Activated T-helper 2 cell treated with anti-CD3 and anti-CD28 coated beads, Interferon-gamma antibody, Interleukin-2, Interleukin-4, amounts not matched to agents 10 μg/mL and 5 μg/mL and 100 μg/mL, durations not matched to agents 14 hours and 24 hours and 36 hours (primary cell): ENCODE measurements at regions of chr10 and their contacts with region 1.

Region 1: DNA sequence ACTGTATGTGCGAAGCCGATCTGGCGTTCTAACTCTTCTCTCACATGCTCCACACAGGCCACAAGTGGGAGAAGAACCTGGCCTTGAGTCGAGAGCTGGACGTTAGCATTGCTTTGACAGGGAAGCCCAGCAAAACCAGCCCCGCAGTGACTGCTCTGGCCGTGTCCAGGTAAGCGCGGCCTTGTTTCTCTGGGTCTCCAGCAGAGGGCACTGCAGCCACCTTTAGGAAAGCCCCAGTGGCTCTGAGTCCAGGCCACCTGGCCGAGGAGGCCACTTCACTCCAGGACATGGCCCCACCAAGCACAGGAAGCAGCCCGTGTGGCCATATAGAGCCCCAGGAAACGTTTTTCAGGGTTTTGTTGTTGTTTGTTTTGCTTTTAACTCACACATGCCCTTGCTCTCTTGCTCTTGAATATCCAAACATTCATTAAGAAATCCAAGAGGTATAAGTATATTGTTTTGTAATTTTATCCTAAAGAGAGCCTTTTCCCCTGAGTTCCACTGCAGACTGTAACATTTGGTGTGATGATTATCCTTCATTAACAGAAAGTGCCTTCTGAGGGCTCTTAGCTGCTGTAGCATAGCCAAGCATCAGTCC is 41.8 kb upstream of the LRRC18 start:
- DNase-seq: peak; percentile 20
- H3K4me3 Mint-ChIP-seq: no peak overlapping the region
- H3K27ac Mint-ChIP-seq: no peak overlapping the region
- H3K4me1 Mint-ChIP-seq: no peaks in the 10 kb centered on the region
- H3K27me3 Mint-ChIP-seq: no peaks in the 10 kb centered on the region

Region 2: DNA sequence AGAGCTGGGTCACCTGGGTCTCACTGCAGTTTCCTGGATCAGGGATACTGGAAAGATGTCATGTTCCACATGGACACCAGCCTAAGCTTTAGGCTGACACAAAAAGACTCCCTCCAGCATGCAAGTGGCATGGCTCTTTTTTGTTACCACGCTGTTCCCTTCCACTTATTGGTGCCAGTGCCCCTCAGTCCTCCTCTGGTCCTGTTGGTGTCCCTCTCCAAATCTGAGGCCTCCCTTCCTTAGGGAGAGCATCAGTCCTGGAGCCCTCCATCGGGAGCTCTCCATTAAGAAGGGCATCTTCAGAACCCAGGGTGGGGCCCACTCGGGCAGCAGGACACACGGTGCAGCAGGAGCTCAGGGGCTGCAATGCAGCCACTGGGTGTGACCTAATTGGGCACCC is 34.3 kb after region 1 on chr10:
- intact Hi-C with region 1: no loop called
- DNase-seq: no peak
- H3K4me3 Mint-ChIP-seq: no peak overlapping the region
- H3K27ac Mint-ChIP-seq: no peak overlapping the region
- H3K4me1 Mint-ChIP-seq: no peaks in the 10 kb centered on the region
- H3K27me3 Mint-ChIP-seq: peaks cover 10% of the 10 kb centered on the region

Region 3: DNA sequence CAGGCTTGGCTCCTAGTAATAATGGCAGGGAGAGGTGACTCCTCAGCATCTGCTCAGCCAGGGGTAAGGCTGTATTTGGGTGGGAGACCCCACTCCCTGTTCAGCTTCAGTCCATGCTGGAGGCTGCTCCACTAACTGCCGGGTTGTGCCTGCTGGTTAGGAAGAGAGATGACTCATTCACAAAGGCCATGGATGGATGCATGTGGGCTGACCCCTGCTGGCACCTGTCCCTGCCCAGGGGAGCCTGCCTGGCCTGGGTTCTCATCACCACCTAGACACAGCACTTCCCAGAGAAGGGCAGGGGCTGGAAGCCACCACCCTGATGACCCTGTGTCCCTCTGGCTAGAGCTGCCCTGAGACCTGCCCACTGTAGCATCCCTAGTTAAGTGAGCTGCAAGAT is 74.9 kb after region 1 on chr10:
- intact Hi-C with region 1: no loop called
- DNase-seq: no peak
- H3K4me3 Mint-ChIP-seq: no peak overlapping the region
- H3K27ac Mint-ChIP-seq: no peak overlapping the region
- H3K4me1 Mint-ChIP-seq: peaks cover 5% of the 10 kb centered on the region
- H3K27me3 Mint-ChIP-seq: peaks cover 8% of the 10 kb centered on the region

Region 4: DNA sequence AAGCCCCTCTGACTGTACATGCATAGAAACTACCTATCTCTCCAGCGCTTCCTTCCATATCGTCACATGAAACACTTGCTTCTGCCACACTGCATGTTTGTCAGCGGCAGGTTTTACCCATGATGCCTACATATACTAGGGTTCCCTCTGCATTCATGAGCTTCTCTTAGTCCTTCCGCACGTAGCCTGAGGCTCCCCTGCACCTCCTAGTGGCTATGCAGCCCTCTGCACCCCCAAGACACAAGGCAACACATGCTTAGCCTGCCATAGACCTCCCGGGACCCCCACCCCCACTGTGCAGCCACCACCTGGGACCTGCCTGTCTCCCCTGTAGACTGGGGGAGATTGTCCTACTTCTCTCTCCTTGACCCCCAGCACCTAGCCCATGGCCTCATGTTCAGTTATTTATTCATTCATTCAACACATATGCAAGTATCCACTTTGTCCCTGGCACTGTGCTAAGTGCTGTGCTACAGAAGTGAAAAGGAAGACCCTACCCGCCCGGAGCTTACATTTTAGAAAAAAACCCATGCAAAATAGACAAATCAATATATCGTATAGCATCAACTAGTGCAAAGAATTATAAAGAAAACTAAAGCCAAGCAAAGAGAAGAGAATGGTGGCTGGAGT is 183.3 kb after region 1 on chr10:
- intact Hi-C with region 1: loop called (anchors 1 kb)
- DNase-seq: peak; percentile 50
- H3K4me3 Mint-ChIP-seq: no peak overlapping the region
- H3K27ac Mint-ChIP-seq: peak overlapping the region; percentile 7
- H3K4me1 Mint-ChIP-seq: peaks cover 41% of the 10 kb centered on the region
- H3K27me3 Mint-ChIP-seq: no peaks in the 10 kb centered on the region

Region 5: DNA sequence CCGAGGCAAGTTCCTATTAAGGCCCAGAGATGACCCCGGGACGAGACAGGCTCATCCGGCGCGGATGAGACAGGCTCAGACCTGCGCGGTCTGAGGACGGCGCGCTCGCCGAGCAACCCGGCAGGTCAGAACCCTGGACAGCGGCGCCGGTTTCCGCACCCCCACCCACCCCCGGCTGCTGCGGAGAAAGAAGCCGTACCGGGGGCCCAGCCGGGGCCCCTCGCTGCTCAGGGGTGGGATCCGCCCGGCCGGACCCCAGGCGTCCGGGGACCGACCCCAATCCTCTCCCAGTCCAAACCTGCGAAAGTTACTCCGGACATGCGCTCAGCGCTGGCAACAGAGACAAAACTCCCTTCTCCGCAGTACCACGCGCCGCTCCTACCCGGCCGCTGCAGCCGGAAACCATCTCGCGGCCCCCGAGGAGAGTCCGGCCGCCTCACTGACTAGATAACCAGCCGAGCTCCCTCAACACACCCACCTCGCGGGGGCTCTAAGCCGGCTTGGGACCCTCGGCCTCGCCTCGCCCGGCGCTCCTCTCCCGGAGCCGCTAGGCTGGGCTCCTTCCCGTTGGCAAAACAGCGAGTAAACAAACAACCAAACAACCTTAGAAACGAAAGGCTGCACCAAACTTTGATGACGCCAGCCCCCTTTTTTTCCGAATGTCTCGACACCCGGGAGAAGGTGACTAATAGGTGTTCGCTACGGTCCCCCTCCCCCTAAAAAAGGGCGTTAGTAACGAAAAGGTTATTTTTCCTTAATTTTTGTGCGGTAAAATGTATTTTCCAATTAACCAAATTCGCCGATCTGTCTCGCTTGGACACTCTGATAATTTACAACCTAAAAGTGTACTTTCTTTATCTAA is 416.8 kb after region 1 on chr10:
- intact Hi-C with region 1: loop called (anchors 5 kb)
- DNase-seq: peak; percentile 47
- H3K4me3 Mint-ChIP-seq: no peak overlapping the region
- H3K27ac Mint-ChIP-seq: no peak overlapping the region
- H3K4me1 Mint-ChIP-seq: peaks cover 5% of the 10 kb centered on the region
- H3K27me3 Mint-ChIP-seq: peaks cover 77% of the 10 kb centered on the region

Region 6: DNA sequence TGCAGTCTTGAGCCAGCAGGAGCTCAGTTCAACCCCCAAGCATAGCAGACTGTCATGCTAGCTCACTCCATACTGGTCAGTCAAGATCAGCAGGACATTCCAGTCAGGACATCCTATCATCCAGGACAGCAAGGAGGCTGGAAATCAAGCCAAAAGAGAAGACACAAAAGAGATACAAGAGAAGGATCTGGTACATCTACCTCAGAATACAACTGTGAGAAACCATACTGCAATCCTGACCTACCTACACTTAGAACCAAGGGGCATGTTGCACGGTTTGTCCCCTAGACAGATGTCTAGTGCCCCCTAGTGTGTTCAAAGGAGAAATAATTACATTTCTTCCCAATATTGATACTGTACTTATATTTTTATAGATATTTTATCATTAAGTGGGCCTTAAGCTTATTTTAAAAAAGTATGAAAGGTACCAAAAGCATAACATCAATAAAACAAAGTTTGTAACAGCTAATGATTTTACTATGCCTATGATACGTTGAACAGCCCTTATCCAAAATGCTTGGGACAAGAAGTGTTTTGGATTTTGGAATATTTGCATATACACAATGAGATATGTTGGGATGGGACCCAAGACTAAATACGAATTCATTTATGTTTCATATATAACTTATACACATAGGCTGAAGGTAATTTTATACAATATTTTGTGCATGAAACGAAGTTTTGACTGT is 530.9 kb after region 1 on chr10:
- intact Hi-C with region 1: loop called (anchors 5 kb)
- DNase-seq: no peak
- H3K4me3 Mint-ChIP-seq: no peak overlapping the region
- H3K27ac Mint-ChIP-seq: no peak overlapping the region
- H3K4me1 Mint-ChIP-seq: peaks cover 22% of the 10 kb centered on the region
- H3K27me3 Mint-ChIP-seq: peaks cover 2% of the 10 kb centered on the region